Left cardiac atrium (tissue), 4 donors: ENCODE measurements at regions of chr5 and their contacts with region 1.

Region 1: GRCh38 chr5:14108170-14108996 is 34.8 kb upstream of the TRIO start:
- DNase-seq: peak; percentile 66
- ATAC-seq: peak; percentile 90 to 91

Region 2: DNA sequence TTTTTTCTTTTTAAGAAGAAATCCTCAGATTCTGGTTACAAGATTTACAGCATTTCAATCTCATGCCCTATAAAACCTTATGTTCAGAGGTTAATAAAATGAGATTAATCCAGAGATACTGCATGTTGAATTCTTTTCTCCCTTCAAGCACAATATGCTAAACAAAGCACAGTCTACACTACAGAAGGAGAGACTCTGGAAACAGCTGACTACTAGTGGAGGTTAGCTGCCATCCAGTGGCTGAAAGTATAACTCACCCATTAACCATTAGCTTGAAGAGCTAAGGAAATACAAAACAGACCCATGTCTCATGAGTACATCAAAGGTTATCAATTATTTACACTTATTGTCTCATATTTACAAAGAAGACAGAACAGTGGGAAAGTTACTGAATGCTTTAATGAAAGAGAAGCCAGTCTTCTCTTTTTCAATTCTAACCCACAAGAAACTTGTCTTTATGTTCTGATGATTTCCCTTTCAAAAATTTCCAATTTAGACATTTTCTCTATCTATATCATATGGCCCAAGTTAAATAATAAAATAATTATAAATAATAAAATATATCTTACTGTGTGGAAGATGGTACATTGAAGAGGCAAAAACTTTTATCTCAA is 151.2 kb before region 1 on chr5:
- intact Hi-C with region 1: no loop called
- DNase-seq: no peak
- ATAC-seq: peak; percentile 71 to 76

Region 3: DNA sequence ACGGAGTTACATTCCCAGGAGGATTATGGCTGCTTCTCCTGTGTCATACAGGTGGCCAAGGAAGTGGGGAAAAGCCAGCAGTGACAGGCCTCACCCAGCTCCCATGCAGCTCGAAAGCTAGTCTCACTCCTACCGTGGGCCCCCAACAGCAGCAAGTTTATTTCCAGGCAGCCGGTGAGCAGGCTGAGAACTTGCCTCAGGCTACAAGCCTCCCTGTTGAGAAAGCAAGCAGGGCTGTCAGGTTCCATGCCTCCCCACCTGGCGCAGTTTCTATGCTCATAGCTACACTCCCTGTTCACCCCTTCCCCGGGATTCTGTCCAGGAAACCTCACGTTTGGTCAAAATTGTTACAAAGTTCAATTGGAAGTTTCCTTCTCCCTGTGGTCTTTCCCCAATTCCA is 136.3 kb before region 1 on chr5:
- intact Hi-C with region 1: no loop called
- DNase-seq: no peak
- ATAC-seq: no peak

Region 4: GRCh38 chr5:13987843-13988464 is 120.4 kb before region 1 on chr5:
- intact Hi-C with region 1: loop called (anchors 10 kb)
- DNase-seq: peak; percentile 40
- ATAC-seq: peak; percentile 53 to 72

Region 5: GRCh38 chr5:13994621-13995253 is 113.6 kb before region 1 on chr5:
- intact Hi-C with region 1: loop called (anchors 10 kb)
- DNase-seq: no peak
- ATAC-seq: no peak

Region 6: GRCh38 chr5:14011089-14012004 is 97.0 kb before region 1 on chr5:
- intact Hi-C with region 1: loop called in 1 of 2 experiments (anchors 10 kb)
- DNase-seq: peak; percentile 91
- ATAC-seq: peak; percentile 96 to 98

Region 7: GRCh38 chr5:14270209-14270702 is 161.9 kb after region 1 on chr5:
- intact Hi-C with region 1: loop called (anchors 1 to 10 kb)
- DNase-seq: peak; percentile 45
- ATAC-seq: peak; percentile 82 to 95